ENCODE measurements at regions of chr13 and their contacts with region 1.

Region 1: DNA sequence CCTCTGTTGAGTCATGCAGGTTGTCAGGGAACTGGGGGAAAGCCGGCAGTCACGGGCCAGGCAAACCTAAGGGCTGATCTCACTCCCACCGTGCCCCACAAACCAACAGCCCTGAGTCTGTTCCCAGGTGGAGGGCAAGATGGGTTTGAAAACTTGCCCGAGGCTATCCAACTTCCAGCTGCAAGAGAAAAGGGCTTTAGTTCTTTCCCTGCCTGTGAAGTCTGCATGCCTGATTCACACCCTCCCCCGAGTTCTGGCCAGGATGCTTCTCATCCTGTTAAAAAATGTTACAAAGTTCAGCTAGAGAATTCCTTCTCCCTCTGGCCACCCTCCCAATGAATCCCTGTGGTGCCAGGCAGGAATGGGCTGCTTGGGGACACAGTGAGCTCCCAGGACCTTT is 33.1 kb downstream of the MYO16 start:
- DNase-seq: no peak
- ATAC-seq: no peak
- H3K4me3 ChIP-seq: no peak overlapping the region
- H3K27ac ChIP-seq: no peak overlapping the region
- H3K4me1 ChIP-seq: no peaks in the 10 kb centered on the region
- H3K27me3 ChIP-seq: no peaks in the 10 kb centered on the region
- CTCF ChIP-seq: no peak
- EP300 ChIP-seq: no peak
- POLR2A ChIP-seq: no peak
- RAD21 ChIP-seq: no peak

Region 2: DNA sequence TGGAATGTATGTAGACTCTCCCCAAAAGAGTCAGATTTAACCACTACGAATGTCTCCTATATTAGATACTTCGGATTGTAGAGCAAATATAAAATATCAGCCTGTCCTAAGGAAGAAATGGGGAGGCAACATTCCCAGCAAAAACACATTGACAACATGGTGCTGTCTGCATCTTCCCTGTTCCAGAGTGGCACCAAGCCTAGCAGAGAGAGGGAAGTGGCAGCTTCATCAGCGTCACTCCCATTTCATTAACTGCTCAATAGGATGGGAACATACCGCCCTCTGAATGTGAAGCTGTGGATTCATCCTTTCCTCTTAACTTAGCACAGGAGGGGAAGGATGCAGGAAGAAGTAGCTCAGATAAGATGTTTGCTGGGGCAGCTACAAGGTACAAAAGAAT is 12.2 kb after region 1 on chr13:
- CTCF ChIA-PET with region 1: interaction called, 4 read pairs
- POLR2A ChIA-PET with region 1: interaction called, 3 read pairs
- RAD21 ChIA-PET with region 1: interaction called, 11 read pairs
- SMC1A ChIA-PET with region 1: interaction called, 16 read pairs
- in situ Hi-C with region 1: no loop called
- intact Hi-C with region 1: no loop called
- DNase-seq: no peak
- ATAC-seq: no peak
- H3K4me3 ChIP-seq: no peak overlapping the region
- H3K27ac ChIP-seq: no peak overlapping the region
- H3K4me1 ChIP-seq: no peaks in the 10 kb centered on the region
- H3K27me3 ChIP-seq: no peaks in the 10 kb centered on the region
- CTCF ChIP-seq: no peak
- EP300 ChIP-seq: no peak
- POLR2A ChIP-seq: no peak
- RAD21 ChIP-seq: no peak

Region 3: DNA sequence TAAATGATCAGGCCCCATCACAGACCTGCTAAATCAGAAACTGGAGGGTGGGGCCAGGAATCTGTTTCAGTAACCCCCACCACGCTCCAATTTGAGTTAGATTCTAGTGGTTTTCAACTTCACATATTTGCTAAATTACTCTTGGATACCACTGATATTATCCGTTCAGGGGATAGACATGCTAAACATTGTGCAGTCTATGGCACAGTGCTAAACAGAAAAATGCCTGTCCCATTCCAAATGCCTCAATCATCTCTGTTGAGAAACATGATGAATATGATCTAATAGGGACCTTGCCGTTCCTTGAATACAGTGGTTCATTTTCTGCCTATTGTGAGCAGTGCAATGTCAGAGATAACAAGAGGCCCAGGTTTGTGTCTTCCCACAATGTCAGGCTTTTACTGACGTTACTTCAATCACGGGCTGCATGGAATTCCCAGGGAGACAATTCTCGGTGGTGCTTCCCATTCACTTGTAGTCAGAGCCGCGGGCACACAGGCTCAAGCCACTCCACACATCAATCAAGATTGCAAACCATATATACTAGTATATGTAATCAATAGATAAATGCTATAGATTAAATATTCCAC is 19.6 kb after region 1 on chr13:
- CTCF ChIA-PET with region 1: interaction called, 4 read pairs
- POLR2A ChIA-PET with region 1: no interaction called
- RAD21 ChIA-PET with region 1: interaction called, 7 read pairs
- SMC1A ChIA-PET with region 1: interaction called, 16 read pairs
- in situ Hi-C with region 1: no loop called
- intact Hi-C with region 1: no loop called
- DNase-seq: no peak
- ATAC-seq: no peak
- H3K4me3 ChIP-seq: no peak overlapping the region
- H3K27ac ChIP-seq: no peak overlapping the region
- H3K4me1 ChIP-seq: no peaks in the 10 kb centered on the region
- H3K27me3 ChIP-seq: no peaks in the 10 kb centered on the region
- CTCF ChIP-seq: no peak
- EP300 ChIP-seq: no peak
- POLR2A ChIP-seq: no peak
- RAD21 ChIP-seq: no peak

Measured in GM12878 (cell line).